ENCODE measurements at regions of chr11 and their contacts with region 1.

Region 1: DNA sequence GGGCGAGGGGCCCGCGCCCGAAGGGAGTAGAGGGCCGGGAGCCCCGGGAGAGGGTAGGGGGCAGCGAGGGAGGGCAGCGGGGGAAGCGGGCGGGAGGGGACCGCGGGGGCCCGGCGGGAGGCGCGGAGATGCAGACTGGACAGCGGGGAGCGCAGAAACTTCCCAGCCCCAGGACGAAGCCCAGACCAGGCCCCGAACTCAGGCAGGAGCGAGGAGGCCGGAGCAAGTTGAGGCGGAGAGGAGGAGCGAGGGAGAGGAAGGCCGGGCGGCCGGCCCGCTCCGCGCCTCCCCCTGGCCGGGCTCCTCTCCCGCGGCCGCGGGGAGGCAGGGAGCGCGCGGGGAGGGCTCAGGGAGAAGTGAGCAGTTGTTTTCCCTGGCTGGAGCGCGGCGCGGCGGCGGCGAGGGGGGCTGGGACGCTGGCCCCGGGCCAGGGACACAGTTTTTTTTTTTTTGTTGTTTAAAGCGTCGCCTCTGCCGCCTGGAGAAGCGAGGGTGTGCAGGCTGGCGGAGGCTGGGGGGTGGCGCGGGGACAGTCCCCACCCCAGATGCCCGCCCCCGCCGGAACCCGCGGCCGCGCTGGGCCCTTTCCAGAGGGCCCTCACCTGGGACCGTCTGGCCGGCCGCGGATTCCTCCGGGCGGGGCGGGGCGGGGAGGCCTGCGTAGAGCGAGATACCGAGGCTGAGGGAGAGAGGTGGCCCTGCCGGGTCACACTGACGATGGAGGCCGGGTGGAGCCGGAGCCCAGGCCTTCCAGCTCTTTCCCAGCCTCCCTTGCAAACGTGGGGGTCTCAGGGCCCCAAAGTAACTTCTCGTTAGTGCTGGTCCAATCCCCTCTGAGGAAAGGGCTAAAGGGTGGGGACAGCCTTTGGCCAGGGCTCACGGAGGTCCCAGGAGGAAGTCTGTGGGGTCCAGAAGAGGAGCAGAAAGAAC is at the start of gene LTBP3:
- DNase-seq: peak; percentile 62
- H3K4me3 Mint-ChIP-seq: peak within 1 kb of the TSS; percentile 84
- H3K27ac Mint-ChIP-seq: peak within 1 kb of the TSS; percentile 84
- H3K4me1 Mint-ChIP-seq: peaks cover 57% of the 10 kb centered on the region
- H3K27me3 Mint-ChIP-seq: no peaks in the 10 kb centered on the region
- total RNA-seq, gene LTBP3: 60.7 to 63.3 TPM

Region 2: DNA sequence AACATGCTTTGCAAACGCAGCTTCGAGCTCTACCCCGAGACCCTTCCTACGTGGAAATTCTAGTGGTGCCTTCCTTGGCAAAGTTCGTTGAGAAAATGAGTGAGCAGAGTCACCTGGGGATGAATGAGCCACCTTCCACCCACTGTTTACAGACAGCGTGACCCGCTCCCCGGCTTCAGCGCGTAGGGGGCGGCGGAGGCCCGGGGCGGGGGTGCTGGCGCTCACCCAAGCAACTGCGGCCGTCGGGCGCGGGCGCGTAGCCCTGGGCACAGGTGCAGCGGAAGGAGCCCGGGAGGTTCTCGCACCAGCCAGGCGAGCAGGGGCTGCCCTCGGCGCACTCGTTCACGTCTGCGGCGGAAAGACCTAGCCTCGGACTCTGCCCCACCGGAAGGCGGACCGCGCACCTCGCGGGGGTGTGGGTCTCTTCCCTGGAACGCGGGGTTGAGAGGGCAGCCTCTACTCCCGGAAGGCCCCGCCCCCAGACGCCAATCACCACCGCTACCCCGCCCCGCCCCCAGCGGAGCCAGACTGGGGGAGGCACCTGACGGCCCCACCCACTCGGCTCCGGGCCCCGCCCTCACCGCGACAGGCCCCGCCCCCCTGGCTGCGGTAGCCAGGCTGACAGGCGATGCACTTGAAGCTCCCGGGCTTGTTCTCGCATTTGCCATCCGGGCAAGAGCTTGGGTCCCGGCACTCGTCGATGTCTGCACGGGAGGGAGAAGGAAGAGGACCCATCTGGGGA is 11.9 kb before region 1 on chr11:
- CTCF ChIA-PET with region 1: interaction called, 50 read pairs
- POLR2A ChIA-PET with region 1: interaction called, 5 read pairs
- intact Hi-C with region 1: loop called (anchors 1 kb)
- DNase-seq: peak; percentile 99
- H3K4me3 Mint-ChIP-seq: peak overlapping the region; percentile 77
- H3K27ac Mint-ChIP-seq: peak overlapping the region; percentile 88
- H3K4me1 Mint-ChIP-seq: peaks cover 47% of the 10 kb centered on the region
- H3K27me3 Mint-ChIP-seq: no peaks in the 10 kb centered on the region

Region 3: GRCh38 chr11:65742353-65742752 is 184.1 kb after region 1 on chr11:
- CTCF ChIA-PET with region 1: no interaction called
- POLR2A ChIA-PET with region 1: no interaction called
- intact Hi-C with region 1: no loop called
- DNase-seq: no peak
- H3K4me3 Mint-ChIP-seq: no peak overlapping the region
- H3K27ac Mint-ChIP-seq: no peak overlapping the region
- H3K4me1 Mint-ChIP-seq: no peaks in the 10 kb centered on the region
- H3K27me3 Mint-ChIP-seq: peaks cover 10% of the 10 kb centered on the region